ENCODE measurements at regions of chr7 and their contacts with region 1.

Region 1: GRCh38 chr7:140390466-140391190 is 7.7 kb downstream of the SLC37A3 start:
- DNase-seq: peak; percentile 84
- ATAC-seq: peak; percentile 87
- H3K4me3 ChIP-seq: peak overlapping the region in 3 of 5 experiments; percentile 8 to 15 (median 13)
- H3K4me3 Mint-ChIP-seq: no peak overlapping the region
- H3K27ac ChIP-seq: no peak overlapping the region
- H3K27ac Mint-ChIP-seq: no peak overlapping the region
- H3K4me1 ChIP-seq: peaks cover 30 to 33% of the 10 kb centered on the region in 2 donors
- H3K4me1 Mint-ChIP-seq: peaks cover 9% of the 10 kb centered on the region
- H3K27me3 ChIP-seq: peaks cover 0 to 4% (median 0%) of the 10 kb centered on the region in 4 experiments
- H3K27me3 Mint-ChIP-seq: no peaks in the 10 kb centered on the region
- CTCF ChIP-seq: no peak

Region 2: DNA sequence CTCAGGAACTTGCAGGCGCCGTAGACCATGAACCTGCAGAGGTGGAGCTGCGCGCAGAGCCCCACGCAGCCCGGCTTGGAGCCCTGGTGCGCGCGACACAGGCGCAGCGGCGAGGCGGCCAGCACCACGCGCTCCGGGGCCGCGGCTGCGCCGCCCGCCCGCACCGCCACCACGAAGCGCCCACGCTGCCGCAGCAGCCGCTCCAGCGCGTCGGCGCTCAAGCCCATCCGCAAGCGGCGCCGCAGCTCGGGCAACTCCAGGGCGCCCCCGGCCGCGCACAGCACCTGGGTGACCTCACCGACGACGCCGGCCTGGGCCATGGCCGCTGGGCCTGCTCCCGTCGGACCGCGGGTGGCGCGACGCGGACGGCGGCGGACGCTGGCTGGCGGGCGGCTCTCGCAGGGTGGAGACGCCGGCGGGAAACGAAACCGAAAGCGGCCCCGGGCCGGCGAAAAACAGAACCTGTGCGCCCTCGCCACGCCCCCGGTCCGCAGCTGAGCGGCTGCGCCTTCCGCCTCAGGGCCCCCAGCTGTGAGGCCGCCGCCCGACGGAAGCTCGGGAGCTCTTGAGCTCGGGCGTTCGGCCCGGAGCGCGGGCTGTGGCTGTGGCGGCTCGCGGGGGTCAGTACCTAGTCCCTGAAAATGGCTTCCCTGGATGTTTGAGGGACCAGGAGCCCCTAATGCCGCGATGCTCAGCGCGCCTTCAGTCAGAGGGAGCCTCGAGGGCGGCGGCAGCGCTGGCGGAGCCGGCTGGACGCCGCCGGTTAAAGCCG is 327.9 kb before region 1 on chr7 and contains the start of gene PARP12:
- CTCF ChIA-PET with region 1: no interaction called
- POLR2A ChIA-PET with region 1: no interaction called
- intact Hi-C with region 1: loop called (anchors 5 kb)
- DNase-seq: peak; percentile 96
- ATAC-seq: peak; percentile 86
- H3K4me3 ChIP-seq: peak within 1 kb of the TSS; percentile 67 to 89 (median 84)
- H3K4me3 Mint-ChIP-seq: peak within 1 kb of the TSS; percentile 98
- H3K27ac ChIP-seq: peak within 1 kb of the TSS; percentile 86 to 93
- H3K27ac Mint-ChIP-seq: peak within 1 kb of the TSS; percentile 99
- H3K4me1 ChIP-seq: peaks cover 32 to 38% of the 10 kb centered on the region in 2 donors
- H3K4me1 Mint-ChIP-seq: peaks cover 43% of the 10 kb centered on the region
- H3K27me3 ChIP-seq: no peaks in the 10 kb centered on the region
- H3K27me3 Mint-ChIP-seq: no peaks in the 10 kb centered on the region
- CTCF ChIP-seq: no peak
- total RNA-seq, gene PARP12: 160 and 177 TPM in 2 replicates